Activated CD4-positive, alpha-beta T cell treated with anti-CD3 and anti-CD28 coated beads for 36 hours (primary cell): ENCODE measurements at regions of chr22 and their contacts with region 1.

Region 1: DNA sequence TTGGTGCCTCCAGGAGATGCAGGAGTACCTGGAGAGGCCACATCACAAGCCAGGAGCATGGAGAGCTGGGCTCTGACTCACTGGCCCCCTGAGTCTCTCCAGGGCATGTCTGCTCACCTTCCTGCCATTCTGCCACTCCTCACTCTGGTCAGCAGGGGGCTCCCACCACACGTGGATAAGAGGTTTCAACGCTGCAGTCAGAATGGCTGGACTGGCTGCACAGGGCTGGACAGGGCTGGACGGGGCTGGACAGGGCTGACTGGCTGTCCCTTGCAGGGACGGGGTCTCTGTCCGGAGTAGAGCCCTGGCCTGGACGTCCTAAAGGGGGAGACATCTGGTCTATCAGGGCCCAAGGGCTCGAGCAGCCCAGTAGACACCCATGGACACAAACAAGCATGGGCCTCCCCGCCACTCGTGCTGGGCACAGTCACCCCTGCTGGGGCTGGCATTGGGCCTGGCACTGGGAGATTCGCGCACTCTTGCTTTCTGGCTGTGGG is 34.6 kb downstream of the CYTH4 start:
- DNase-seq: peak; percentile 86
- ATAC-seq: peak; percentile 77
- H3K4me3 Mint-ChIP-seq: no peak overlapping the region
- H3K27ac Mint-ChIP-seq: no peak overlapping the region
- H3K4me1 Mint-ChIP-seq: peaks cover 34% of the 10 kb centered on the region
- H3K27me3 Mint-ChIP-seq: no peaks in the 10 kb centered on the region

Region 2: GRCh38 chr22:37267135-37267587 is 49.8 kb before region 1 on chr22:
- CTCF ChIA-PET with region 1: interaction called, 6 read pairs
- POLR2A ChIA-PET with region 1: no interaction called
- intact Hi-C with region 1: loop called (anchors 1 to 2 kb)
- DNase-seq: peak; percentile 84
- ATAC-seq: peak; percentile 92
- H3K4me3 Mint-ChIP-seq: peak overlapping the region; percentile 79
- H3K27ac Mint-ChIP-seq: peak overlapping the region; percentile 95
- H3K4me1 Mint-ChIP-seq: peaks cover 30% of the 10 kb centered on the region
- H3K27me3 Mint-ChIP-seq: no peaks in the 10 kb centered on the region

Region 3: GRCh38 chr22:37282385-37282677 is 34.6 kb before region 1 on chr22 and contains the start of gene CYTH4:
- CTCF ChIA-PET with region 1: interaction called, 10 read pairs
- POLR2A ChIA-PET with region 1: no interaction called
- intact Hi-C with region 1: no loop called
- DNase-seq: peak; percentile 93
- ATAC-seq: peak; percentile 87
- H3K4me3 Mint-ChIP-seq: peak within 1 kb of the TSS; percentile 82
- H3K27ac Mint-ChIP-seq: peak within 1 kb of the TSS; percentile 98
- H3K4me1 Mint-ChIP-seq: peaks cover 60% of the 10 kb centered on the region
- H3K27me3 Mint-ChIP-seq: no peaks in the 10 kb centered on the region
- total RNA-seq, gene CYTH4: 33.1 to 42.8 TPM

Region 4: DNA sequence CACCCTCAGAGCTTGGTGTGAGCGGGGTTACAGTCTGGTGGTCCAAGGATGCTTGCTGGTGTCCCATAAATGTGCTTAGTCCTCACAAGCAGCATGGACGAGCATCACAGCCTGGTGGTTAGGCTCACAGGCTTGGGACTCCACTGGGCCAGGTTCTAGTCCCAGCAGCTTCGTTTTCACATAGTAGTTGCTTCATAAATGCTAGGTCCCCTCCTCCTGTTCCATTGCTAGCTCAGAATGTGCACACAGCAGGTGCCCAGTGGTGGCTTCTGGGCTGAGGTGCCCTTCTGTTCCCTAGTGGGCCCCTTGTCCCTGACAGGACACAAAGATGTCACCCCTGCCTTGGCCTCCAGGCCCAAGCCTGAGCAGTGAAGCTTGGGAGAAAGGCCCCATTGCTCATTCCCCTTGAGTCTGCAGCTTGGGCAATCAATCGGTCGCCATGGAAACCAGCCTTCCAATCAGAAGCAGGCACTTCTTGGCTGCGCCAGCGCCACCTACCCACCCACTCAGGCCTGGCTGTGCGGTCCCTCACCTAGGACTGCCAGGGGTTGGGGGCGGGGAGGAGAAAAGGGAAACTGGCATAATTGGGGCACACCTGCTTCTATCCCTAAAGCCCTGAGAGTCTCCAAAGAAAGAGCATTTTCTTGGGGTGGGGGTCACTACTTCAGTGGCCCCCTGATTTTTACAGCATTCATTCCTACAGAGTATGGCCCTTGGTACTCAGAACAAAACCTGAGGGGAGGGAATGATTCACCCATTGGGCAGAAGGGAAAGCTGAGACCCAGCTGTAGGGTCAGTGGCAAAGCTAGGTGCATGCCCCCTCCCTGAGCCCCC is 13.5 kb after region 1 on chr22:
- CTCF ChIA-PET with region 1: interaction called, 23 read pairs
- POLR2A ChIA-PET with region 1: no interaction called
- intact Hi-C with region 1: no loop called
- DNase-seq: peak; percentile 80
- ATAC-seq: peak; percentile 86
- H3K4me3 Mint-ChIP-seq: no peak overlapping the region
- H3K27ac Mint-ChIP-seq: no peak overlapping the region
- H3K4me1 Mint-ChIP-seq: peaks cover 7% of the 10 kb centered on the region
- H3K27me3 Mint-ChIP-seq: peaks cover 41% of the 10 kb centered on the region

Region 5: DNA sequence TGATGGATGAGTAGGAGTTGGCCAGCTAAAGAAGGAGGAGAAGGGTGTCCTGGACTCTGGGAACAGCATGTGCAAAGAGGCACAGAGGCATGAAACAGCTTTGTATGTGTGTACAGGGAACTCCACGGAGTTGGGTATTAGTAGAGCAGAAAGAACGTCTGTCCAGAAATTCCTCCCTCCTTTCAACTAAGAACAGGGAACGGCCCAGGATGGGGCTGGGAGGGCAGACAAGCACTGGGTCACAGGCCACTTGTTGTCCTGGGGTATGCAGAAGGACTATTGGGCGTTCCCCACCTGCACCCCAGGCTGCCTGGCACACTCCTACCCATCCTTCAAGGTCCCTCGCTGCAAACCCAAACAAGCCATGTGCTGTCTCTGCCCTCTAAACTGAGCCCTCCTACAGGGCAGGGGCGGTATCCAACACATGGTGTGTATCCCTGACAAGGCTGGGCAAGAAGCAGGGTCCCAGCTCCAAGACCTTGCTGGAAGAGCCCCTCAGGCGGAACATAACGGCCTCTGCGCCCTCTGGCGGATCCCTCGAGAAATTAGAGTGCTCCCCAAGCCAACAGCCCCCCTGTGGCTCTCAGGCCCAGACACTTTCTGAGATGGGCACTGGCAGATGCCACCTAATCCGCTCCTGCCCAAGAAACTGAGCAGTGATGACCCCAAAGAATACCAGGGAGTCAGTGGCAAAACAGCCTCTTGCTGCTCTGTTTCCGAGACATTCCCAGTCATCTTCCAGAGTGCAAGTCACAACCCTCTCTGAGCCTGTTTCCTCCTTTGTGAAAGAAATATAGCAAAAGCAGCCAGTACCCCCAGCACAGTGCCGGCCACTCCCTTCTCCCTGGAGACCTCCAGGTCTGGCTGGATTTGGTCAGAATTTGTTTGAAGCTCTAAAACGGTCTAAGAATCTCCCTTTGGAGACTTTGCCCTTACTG is 112.0 kb after region 1 on chr22:
- CTCF ChIA-PET with region 1: interaction called, 26 read pairs
- POLR2A ChIA-PET with region 1: no interaction called
- intact Hi-C with region 1: loop called (anchors 1 kb)
- DNase-seq: peak; percentile 74
- ATAC-seq: peak; percentile 21
- H3K4me3 Mint-ChIP-seq: no peak overlapping the region
- H3K27ac Mint-ChIP-seq: no peak overlapping the region
- H3K4me1 Mint-ChIP-seq: peaks cover 17% of the 10 kb centered on the region
- H3K27me3 Mint-ChIP-seq: peaks cover 50% of the 10 kb centered on the region

Region 6: DNA sequence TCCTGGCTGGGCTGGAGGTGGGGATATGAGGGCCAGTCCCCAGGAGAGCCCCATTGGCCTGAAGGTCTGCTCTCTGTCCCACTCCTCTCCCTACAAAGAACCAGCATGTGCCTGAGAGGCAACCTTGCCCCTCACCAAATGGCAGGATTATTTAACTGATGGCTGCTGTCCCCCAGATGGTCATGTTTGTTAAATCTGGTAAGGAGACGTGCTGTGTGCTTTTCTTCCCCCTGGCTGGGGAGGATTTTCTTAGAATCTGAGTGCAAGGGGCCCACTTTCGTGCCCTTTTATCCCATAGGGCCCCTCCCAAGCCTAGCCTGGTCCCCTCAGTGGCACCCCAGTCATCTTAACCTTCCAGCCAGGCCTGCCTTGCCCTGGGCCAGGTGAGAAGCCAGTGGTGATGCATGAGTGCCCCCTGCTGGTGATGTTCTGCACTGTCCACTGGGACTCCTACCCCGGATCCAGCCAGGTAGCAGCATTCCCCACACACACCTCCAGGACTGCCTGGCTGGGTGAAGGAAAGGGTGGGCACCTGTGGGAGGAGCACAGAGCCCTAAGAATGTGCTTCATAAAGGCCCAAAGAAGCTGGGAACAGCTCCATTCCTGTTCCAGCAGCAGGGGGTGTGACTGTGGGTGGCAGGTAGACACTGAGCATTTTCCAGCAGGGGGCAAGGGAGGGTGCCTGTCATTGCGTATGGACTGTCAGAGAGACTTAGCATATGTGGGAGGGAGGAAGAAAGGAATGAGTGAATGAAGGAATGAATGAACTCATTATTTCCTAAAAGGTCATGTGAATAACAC is 140.4 kb after region 1 on chr22:
- CTCF ChIA-PET with region 1: interaction called, 51 read pairs
- POLR2A ChIA-PET with region 1: no interaction called
- intact Hi-C with region 1: loop called (anchors 1 kb)
- DNase-seq: peak; percentile 93
- ATAC-seq: peak; percentile 99
- H3K4me3 Mint-ChIP-seq: no peak overlapping the region
- H3K27ac Mint-ChIP-seq: no peak overlapping the region
- H3K4me1 Mint-ChIP-seq: peaks cover 2% of the 10 kb centered on the region
- H3K27me3 Mint-ChIP-seq: no peaks in the 10 kb centered on the region

Region 7: DNA sequence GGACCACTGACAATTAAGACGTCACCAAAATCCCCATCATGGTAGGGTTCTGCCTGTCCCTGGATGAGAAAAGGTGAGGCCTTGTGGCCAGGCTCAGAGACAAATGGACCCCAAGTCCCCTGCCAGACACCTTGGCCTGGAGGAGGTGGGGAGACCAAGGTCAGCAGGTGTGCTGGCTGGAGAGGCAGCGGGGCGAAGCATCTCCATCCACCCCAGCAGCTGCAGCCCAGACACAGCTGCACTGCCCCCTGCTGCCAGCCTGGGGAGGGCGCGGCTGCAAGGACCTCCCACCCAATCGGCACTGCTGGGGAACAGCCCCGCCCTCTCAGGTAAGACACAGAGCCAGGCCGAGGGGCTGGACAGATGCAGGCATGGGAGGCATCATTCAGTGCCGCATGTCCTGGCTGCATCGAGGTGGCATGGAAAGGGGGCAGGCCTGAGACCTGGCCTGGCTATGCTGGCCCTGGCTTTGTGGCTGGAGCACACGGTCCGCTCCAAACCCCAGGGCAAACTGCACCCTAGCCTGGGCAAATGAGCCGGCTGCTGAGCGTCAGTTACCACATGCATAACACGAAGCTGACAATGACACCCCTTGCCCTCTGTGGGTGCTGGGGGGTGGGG is 181.5 kb after region 1 on chr22:
- CTCF ChIA-PET with region 1: interaction called, 3 read pairs
- POLR2A ChIA-PET with region 1: no interaction called
- intact Hi-C with region 1: loop called in 1 of 2 experiments (anchors 1 kb)
- DNase-seq: peak; percentile 84
- ATAC-seq: peak; percentile 98
- H3K4me3 Mint-ChIP-seq: no peak overlapping the region
- H3K27ac Mint-ChIP-seq: no peak overlapping the region
- H3K4me1 Mint-ChIP-seq: peaks cover 15% of the 10 kb centered on the region
- H3K27me3 Mint-ChIP-seq: no peaks in the 10 kb centered on the region